ENCODE measurements at regions of chr7 and their contacts with region 1.

Region 1: GRCh38 chr7:66617295-66617694 is 11.4 kb upstream of the KCTD7 start:
- DNase-seq: no peak
- ATAC-seq: no peak
- H3K4me3 ChIP-seq: no peak overlapping the region
- H3K27ac ChIP-seq: peak overlapping the region in 1 of 12 donors; percentile 70
- H3K4me1 ChIP-seq: no peaks in the 10 kb centered on the region
- H3K27me3 ChIP-seq: no peaks in the 10 kb centered on the region
- CTCF ChIP-seq: no peak
- POLR2A ChIP-seq: no peak

Region 2: DNA sequence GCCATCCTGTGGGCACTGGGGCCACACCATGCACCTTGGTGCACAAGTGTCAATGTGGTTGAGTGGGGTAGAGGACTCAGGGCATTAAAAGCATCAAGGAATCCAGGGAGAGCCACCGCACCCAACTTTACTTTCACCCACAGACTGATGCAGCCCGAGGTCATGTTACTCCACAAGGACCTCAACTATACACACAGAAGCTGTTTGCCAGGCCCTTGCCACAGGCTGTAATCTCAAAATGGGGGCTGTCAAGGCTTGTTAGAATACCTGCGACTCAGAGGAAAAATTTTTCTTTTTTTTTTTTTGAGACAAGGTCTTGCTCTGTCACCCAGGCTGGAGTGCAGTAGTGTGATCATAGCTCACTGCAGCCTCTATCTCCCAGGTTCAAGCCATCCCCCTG is 15.1 kb before region 1 on chr7:
- intact Hi-C with region 1: loop called in 1 of 10 experiments (anchors 2 kb)
- DNase-seq: no peak
- ATAC-seq: no peak
- H3K4me3 ChIP-seq: no peak overlapping the region
- H3K27ac ChIP-seq: no peak overlapping the region
- H3K4me1 ChIP-seq: no peaks in the 10 kb centered on the region
- H3K27me3 ChIP-seq: no peaks in the 10 kb centered on the region
- CTCF ChIP-seq: no peak
- POLR2A ChIP-seq: no peak

Region 3: GRCh38 chr7:66930341-66930740 is 313.0 kb after region 1 on chr7:
- intact Hi-C with region 1: no loop called
- DNase-seq: no peak
- ATAC-seq: no peak
- H3K4me3 ChIP-seq: no peak overlapping the region
- H3K27ac ChIP-seq: no peak overlapping the region
- H3K4me1 ChIP-seq: peaks cover 0 to 47% (median 15%) of the 10 kb centered on the region in 12 donors
- H3K27me3 ChIP-seq: no peaks in the 10 kb centered on the region
- CTCF ChIP-seq: no peak
- POLR2A ChIP-seq: no peak

Measured in heart left ventricle (tissue), 16 donors.